ENCODE measurements at regions of chr5 and their contacts with region 1.

Region 1: DNA sequence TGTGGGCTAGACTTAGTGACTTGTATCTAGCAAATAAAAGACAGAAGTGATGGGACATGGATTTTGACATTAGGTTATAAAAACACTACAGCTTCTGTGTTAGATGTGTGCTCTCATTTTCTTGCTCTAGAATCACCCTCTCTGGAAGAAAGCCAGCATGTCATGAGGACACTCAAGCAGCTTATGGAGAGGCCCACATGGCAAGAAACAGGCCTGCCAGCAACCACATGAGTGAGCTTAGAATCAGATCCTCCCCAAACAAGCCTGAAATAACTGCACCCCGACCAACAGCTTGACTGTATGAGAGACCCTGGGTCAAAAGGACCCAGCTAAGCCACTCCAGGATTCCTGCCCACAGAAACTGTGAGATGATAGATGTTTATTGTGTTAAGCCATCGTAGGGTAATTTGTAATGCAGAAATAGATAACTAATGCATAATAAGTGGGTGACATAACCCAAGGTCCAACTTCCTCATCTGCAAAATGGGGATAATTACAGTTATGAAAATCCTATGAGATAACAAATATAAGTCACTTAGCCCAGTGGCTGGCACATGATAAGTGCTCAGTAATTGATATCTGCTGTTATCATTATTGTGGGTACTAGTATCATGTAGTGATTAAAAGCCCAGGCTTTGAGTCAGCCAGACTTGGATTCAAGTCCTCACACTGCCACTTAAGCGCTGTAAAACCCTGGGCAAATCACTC is 86.5 kb downstream of the KLHL3 start:
- DNase-seq: no peak
- ATAC-seq: no peak
- H3K4me3 ChIP-seq: no peak overlapping the region
- H3K27ac ChIP-seq: no peak overlapping the region
- H3K4me1 ChIP-seq: no peaks in the 10 kb centered on the region
- H3K27me3 ChIP-seq: no peaks in the 10 kb centered on the region; the same call in 1 of the 2 replicates
- CTCF ChIP-seq: no peak

Region 2: GRCh38 chr5:136014049-136015002 is 1635.1 kb before region 1 on chr5:
- CTCF ChIA-PET with region 1: no interaction called
- POLR2A ChIA-PET with region 1: interaction called, 15 read pairs
- in situ Hi-C with region 1: no loop called
- intact Hi-C with region 1: no loop called
- DNase-seq: no peak
- ATAC-seq: peak; percentile 57; the same call in 1 of the 2 replicates
- H3K4me3 ChIP-seq: no peak overlapping the region
- H3K27ac ChIP-seq: no peak overlapping the region
- H3K4me1 ChIP-seq: no peaks in the 10 kb centered on the region
- H3K27me3 ChIP-seq: no peaks in the 10 kb centered on the region
- CTCF ChIP-seq: no peak

Region 3: DNA sequence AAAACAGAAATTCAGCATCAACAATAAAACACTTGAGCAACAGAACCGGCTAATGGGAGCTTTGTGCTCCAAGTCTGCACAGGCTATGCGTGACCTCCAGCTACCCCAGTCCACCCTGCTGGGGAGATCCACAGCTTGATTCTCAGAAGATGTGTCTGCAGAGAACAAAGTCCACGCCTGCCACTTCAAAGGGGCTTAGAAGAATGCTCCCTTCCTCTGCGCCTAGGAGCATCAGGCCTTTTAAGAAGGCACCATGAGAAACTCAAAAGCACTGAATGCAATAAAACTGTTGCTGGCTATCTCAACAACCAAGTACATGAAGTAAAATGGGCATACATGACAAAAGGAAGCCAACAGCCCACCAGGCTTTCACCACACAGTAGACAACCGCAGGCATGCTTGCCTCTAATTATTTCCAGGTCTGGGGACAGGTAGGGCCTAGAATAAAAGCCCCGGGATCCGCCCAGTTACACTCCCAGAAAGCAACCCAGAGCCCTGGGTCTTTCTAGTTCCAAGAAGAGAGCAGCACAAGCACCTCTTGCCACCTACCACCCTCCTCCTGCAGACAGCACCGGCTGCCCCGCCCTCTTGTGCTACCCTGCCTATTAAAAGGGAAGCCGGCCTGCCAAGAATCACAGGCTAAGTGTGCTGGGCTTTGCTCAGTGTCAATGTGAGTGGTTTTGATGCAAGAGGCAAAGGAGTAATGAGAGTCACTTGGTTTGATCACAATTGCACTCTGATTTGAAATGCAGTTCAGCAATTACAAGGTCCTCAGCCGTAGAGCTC is 273.4 kb before region 1 on chr5:
- CTCF ChIA-PET with region 1: no interaction called
- POLR2A ChIA-PET with region 1: no interaction called
- in situ Hi-C with region 1: no loop called
- intact Hi-C with region 1: no loop called
- DNase-seq: no peak
- ATAC-seq: no peak
- H3K4me3 ChIP-seq: no peak overlapping the region
- H3K27ac ChIP-seq: no peak overlapping the region
- H3K4me1 ChIP-seq: no peaks in the 10 kb centered on the region
- H3K27me3 ChIP-seq: no peaks in the 10 kb centered on the region
- CTCF ChIP-seq: no peak

Region 4: DNA sequence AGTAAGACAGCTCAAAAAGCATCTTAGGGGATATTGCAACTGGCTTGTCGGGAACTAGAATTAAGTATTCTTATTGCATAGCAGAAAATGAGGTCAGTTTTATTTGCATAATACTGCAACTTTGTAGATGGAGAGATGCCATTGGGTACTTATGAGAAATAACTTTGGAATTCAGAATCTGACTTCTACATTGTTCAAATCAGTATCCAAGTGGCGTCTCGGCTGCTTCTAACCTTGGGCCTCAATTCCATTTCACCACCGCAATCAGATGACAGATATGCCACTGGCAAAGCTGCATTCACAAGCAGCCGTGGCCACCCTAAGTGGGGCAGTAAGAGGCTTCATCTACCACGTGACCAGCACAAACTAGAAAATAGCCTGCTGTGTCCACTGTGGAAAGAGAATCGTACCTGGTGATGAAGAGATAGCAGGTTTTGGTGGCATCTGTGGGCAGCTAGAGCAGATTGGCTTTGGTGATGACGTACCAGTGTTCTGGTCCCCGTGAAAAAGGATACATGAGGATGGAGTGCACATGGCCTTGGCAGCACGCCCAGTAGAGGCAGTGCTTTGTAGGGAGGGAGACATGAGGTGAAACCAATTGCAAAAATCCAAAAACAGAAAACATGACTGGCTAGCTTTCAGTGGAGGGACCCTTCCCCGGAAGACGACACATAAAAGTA is 30.1 kb before region 1 on chr5:
- CTCF ChIA-PET with region 1: no interaction called
- POLR2A ChIA-PET with region 1: no interaction called
- in situ Hi-C with region 1: no loop called
- intact Hi-C with region 1: no loop called
- DNase-seq: no peak
- ATAC-seq: no peak
- H3K4me3 ChIP-seq: no peak overlapping the region
- H3K27ac ChIP-seq: no peak overlapping the region
- H3K4me1 ChIP-seq: no peaks in the 10 kb centered on the region
- H3K27me3 ChIP-seq: no peaks in the 10 kb centered on the region
- CTCF ChIP-seq: no peak